IMR-90 (cell line): ENCODE measurements at regions of chr6 and their contacts with region 1.

Region 1: GRCh38 chr6:47631269-47631772 is 67.1 kb upstream of the ADGRF4 start:
- DNase-seq: peak; percentile 45
- ATAC-seq: peak; percentile 47
- H3K4me3 ChIP-seq: no peak overlapping the region
- H3K27ac ChIP-seq: no peak overlapping the region
- H3K4me1 ChIP-seq: no peaks in the 10 kb centered on the region
- H3K27me3 ChIP-seq: no peaks in the 10 kb centered on the region
- CTCF ChIP-seq: peak; percentile 66
- POLR2A ChIP-seq: no peak
- RAD21 ChIP-seq: peak; percentile 66

Region 2: GRCh38 chr6:47769982-47770381 is 138.7 kb after region 1 on chr6:
- CTCF ChIA-PET with region 1: interaction called, 3 read pairs
- POLR2A ChIA-PET with region 1: no interaction called
- dilution Hi-C with region 1: no loop called
- in situ Hi-C with region 1: loop called (anchors 5 kb)
- intact Hi-C with region 1: no loop called
- DNase-seq: no peak
- ATAC-seq: no peak
- H3K4me3 ChIP-seq: no peak overlapping the region
- H3K27ac ChIP-seq: no peak overlapping the region
- H3K4me1 ChIP-seq: no peaks in the 10 kb centered on the region
- H3K27me3 ChIP-seq: no peaks in the 10 kb centered on the region
- CTCF ChIP-seq: no peak
- POLR2A ChIP-seq: no peak
- RAD21 ChIP-seq: no peak

Region 3: DNA sequence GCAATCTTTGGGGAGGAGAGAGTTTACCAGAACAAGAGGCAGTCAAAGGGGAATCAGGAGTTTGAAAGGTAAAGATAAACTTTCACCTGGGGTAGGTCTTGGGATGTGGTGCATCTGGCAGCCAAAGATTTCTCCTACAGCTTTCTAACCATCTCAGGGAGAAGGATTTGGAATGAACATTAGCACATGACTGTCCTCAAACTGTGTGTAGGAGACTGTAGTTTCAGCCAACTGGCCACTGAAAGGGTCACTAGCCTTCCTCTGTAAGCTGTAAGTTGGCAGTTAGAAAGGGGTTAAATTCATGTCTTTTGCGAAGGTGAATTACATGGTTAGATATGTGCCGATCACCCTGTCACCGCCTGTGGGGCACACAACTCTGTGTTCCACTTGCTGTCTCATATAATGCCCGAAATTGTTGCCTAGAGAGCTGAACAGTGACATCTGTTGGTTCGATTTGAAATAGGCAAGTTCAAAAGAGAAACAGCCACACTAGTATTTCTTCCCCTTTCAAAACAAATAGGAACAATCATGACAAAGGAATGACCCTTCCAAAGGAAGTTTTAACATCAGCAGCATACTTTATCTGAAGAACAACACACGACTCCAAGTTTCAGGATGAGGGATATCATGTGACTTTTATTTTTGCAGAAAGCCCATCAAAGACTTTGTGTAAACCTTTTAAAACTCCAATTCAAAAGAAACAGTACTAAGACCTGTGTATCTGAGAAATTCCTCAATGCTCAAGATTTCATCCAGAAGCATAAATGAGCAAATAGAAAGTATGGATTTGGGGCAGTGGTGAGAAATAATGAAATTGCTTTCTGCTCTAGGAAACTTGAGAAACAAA is 149.4 kb after region 1 on chr6:
- CTCF ChIA-PET with region 1: interaction called, 15 read pairs
- POLR2A ChIA-PET with region 1: no interaction called
- dilution Hi-C with region 1: no loop called
- in situ Hi-C with region 1: no loop called
- intact Hi-C with region 1: loop called (anchors 1 kb)
- DNase-seq: peak; percentile 73
- ATAC-seq: peak; percentile 98
- H3K4me3 ChIP-seq: no peak overlapping the region
- H3K27ac ChIP-seq: no peak overlapping the region
- H3K4me1 ChIP-seq: no peaks in the 10 kb centered on the region
- H3K27me3 ChIP-seq: peaks cover 3% of the 10 kb centered on the region; the same call in 1 of the 2 replicates
- CTCF ChIP-seq: peak; percentile 76
- POLR2A ChIP-seq: no peak
- RAD21 ChIP-seq: peak; percentile 66

Region 4: GRCh38 chr6:49409951-49410542 is 1778.7 kb after region 1 on chr6:
- CTCF ChIA-PET with region 1: no interaction called
- POLR2A ChIA-PET with region 1: no interaction called
- dilution Hi-C with region 1: no loop called
- in situ Hi-C with region 1: no loop called
- intact Hi-C with region 1: loop called (anchors 10 kb)
- DNase-seq: peak; percentile 61
- ATAC-seq: peak; percentile 97
- H3K4me3 ChIP-seq: no peak overlapping the region
- H3K27ac ChIP-seq: no peak overlapping the region
- H3K4me1 ChIP-seq: no peaks in the 10 kb centered on the region
- H3K27me3 ChIP-seq: no peaks in the 10 kb centered on the region
- CTCF ChIP-seq: peak; percentile 84
- POLR2A ChIP-seq: no peak
- RAD21 ChIP-seq: peak; percentile 80